PC-3 (cell line): ENCODE measurements at regions of chr5 and their contacts with region 1.

Region 1: GRCh38 chr5:93058309-93058708 is 522.7 kb downstream of the NR2F1-AS1 start:
- DNase-seq: peak; percentile 81
- ATAC-seq: peak; percentile 70
- H3K4me3 ChIP-seq: no peak overlapping the region
- H3K27ac ChIP-seq: peak overlapping the region; percentile 45
- H3K4me1 ChIP-seq: peaks cover 45% of the 10 kb centered on the region
- H3K27me3 ChIP-seq: no peaks in the 10 kb centered on the region
- CTCF ChIP-seq: no peak

Region 2: GRCh38 chr5:92945630-92946097 is 112.6 kb before region 1 on chr5:
- CTCF ChIA-PET with region 1: no interaction called
- POLR2A ChIA-PET with region 1: no interaction called
- intact Hi-C with region 1: loop called (anchors 5 kb)
- DNase-seq: peak; percentile 62
- ATAC-seq: peak; percentile 53
- H3K4me3 ChIP-seq: peak overlapping the region; percentile 27
- H3K27ac ChIP-seq: peak overlapping the region; percentile 98
- H3K4me1 ChIP-seq: peaks cover 45% of the 10 kb centered on the region
- H3K27me3 ChIP-seq: no peaks in the 10 kb centered on the region
- CTCF ChIP-seq: no peak

Region 3: DNA sequence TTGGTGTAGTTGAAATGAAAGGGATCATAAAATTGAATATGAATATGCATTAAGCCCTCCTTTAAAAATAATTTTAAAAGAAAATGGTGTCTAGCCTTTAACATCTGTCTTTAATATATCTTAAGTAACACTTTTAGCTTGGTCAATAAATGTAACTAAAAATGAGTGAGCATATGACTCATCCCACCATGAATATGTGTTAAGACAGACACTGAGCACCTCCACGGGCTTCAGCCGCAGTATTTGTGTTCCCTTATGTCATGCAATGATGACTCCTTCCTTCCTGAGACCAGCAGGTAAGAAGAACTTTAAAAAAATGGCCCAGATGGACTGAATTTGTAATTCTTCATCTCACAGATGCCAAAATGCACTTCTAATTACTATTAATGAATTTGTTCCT is 40.5 kb before region 1 on chr5:
- CTCF ChIA-PET with region 1: no interaction called
- POLR2A ChIA-PET with region 1: no interaction called
- intact Hi-C with region 1: no loop called
- DNase-seq: peak; percentile 91
- ATAC-seq: peak; percentile 95
- H3K4me3 ChIP-seq: no peak overlapping the region
- H3K27ac ChIP-seq: peak overlapping the region; percentile 2; the same call in 1 of the 2 replicates
- H3K4me1 ChIP-seq: peaks cover 19% of the 10 kb centered on the region
- H3K27me3 ChIP-seq: no peaks in the 10 kb centered on the region
- CTCF ChIP-seq: no peak